Head of caudate nucleus (tissue), 42 donors: ENCODE measurements at regions of chr11 and their contacts with region 1.

Region 1: GRCh38 chr11:304915-305843 is 2.4 kb upstream of the IFITM2 start:
- DNase-seq: peak; percentile 22 to 87 (median 64)

Region 2: GRCh38 chr11:355581-356458 is 50.6 kb after region 1 on chr11:
- intact Hi-C with region 1: loop called (anchors 10 kb)
- DNase-seq: peak; percentile 51 to 91 (median 79)